IMR-90 (cell line): ENCODE measurements at regions of chr2 and their contacts with region 1.

Region 1: GRCh38 chr2:105789745-105790460 is 45.2 kb downstream of the NCK2 start:
- DNase-seq: peak; percentile 74
- ATAC-seq: peak; percentile 70
- H3K4me3 ChIP-seq: no peak overlapping the region
- H3K27ac ChIP-seq: no peak overlapping the region
- H3K4me1 ChIP-seq: peaks cover 17% of the 10 kb centered on the region
- H3K27me3 ChIP-seq: no peaks in the 10 kb centered on the region
- CTCF ChIP-seq: 0 out of 2 replicates have a peak, but pooled peaks have one; percentile 1
- POLR2A ChIP-seq: no peak
- RAD21 ChIP-seq: no peak

Region 2: DNA sequence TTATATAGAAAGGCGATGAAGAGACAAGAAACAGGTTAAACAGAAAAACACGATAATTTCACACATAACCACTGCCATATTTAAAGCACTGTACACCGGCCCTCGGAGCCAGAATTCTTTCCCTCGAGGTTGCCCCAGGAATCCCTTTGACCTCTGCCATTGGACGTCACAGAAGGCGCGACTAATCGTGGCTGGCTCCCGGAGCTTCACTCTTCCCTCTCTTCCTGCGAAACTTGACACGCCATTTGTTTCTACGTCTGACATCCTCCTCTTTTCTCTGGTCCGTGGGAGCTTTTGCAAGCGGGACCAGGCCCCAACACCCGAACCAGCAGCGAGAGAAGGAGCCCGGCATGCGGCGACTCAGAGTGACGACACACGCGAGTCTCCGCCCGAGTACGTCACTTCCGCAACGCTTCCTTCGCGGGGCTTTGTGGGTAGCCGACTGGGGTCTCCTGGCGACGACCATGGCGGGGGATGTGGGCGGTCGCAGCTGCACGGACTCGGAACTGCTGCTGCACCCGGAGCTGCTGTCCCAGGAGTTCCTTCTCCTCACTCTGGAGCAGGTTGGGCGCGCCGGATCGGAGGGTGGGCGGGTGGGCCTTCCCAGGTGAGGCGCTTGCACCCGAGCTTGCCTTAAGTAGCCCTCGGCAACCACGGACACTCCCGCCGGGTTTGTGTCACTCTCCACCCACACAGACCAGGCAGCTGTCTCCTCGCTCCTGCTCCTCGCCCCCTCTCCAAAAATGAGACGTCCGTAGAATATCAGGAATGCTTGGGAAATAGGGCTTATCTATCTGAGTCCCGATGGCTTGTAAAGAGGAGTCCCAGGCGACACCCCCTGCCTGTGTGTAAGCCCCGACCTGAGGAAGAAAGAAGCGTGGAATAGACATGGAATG is 452.5 kb before region 1 on chr2 and contains the start of gene C2orf49:
- CTCF ChIA-PET with region 1: no interaction called
- POLR2A ChIA-PET with region 1: no interaction called
- dilution Hi-C with region 1: no loop called
- in situ Hi-C with region 1: loop called (anchors 25 kb)
- intact Hi-C with region 1: no loop called
- DNase-seq: peak; percentile 80
- ATAC-seq: peak; percentile 95
- H3K4me3 ChIP-seq: peak within 1 kb of the TSS; percentile 75
- H3K27ac ChIP-seq: peak within 1 kb of the TSS; percentile 98
- H3K4me1 ChIP-seq: 0 out of 2 replicates have a peak, but pooled peaks cover 3% of the 10 kb centered on the region
- H3K27me3 ChIP-seq: no peaks in the 10 kb centered on the region
- CTCF ChIP-seq: no peak
- POLR2A ChIP-seq: peak; percentile 69
- RAD21 ChIP-seq: no peak
- total RNA-seq, gene C2orf49: 3.8 and 11.1 TPM in 2 replicates

Region 3: GRCh38 chr2:105929516-105929915 is 139.6 kb after region 1 on chr2:
- CTCF ChIA-PET with region 1: no interaction called
- POLR2A ChIA-PET with region 1: no interaction called
- dilution Hi-C with region 1: no loop called
- in situ Hi-C with region 1: no loop called
- intact Hi-C with region 1: no loop called
- DNase-seq: no peak
- ATAC-seq: no peak
- H3K4me3 ChIP-seq: no peak overlapping the region
- H3K27ac ChIP-seq: no peak overlapping the region
- H3K4me1 ChIP-seq: no peaks in the 10 kb centered on the region
- H3K27me3 ChIP-seq: peaks cover 26% of the 10 kb centered on the region
- CTCF ChIP-seq: no peak
- POLR2A ChIP-seq: no peak
- RAD21 ChIP-seq: no peak

Region 4: GRCh38 chr2:106197878-106198277 is 408.0 kb after region 1 on chr2:
- CTCF ChIA-PET with region 1: no interaction called
- POLR2A ChIA-PET with region 1: no interaction called
- dilution Hi-C with region 1: no loop called
- in situ Hi-C with region 1: no loop called
- intact Hi-C with region 1: no loop called
- DNase-seq: peak; percentile 92
- ATAC-seq: peak; percentile 44
- H3K4me3 ChIP-seq: no peak overlapping the region
- H3K27ac ChIP-seq: peak overlapping the region; percentile 9; the same call in 1 of the 2 replicates
- H3K4me1 ChIP-seq: peaks cover 8% of the 10 kb centered on the region
- H3K27me3 ChIP-seq: peaks cover 5% of the 10 kb centered on the region
- CTCF ChIP-seq: no peak
- POLR2A ChIP-seq: no peak
- RAD21 ChIP-seq: no peak